Mammary epithelial cell (primary cell): ENCODE measurements at regions of chr1 and their contacts with region 1.

Region 1: DNA sequence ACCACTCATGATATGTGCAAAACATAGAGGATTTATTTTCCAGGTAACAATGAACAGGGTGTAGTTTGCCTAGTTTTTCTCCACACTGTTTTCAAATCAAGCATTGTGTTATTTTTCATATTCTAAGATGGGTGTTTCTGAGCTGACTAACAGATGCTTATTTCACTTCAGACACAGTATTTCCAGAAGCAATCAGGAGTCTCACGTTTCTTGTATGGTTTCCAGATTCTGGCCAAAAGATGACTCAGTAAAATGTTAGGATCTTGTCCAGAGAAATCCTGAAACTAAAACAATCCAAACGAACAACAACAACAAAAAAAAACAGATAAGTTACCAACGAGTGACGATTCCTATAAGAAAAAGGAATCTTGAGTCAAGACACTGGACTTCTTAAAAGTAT is 5.3 kb downstream of the UTS2 start:
- DNase-seq: peak; percentile 9
- H3K4me3 ChIP-seq: no peak overlapping the region
- H3K27ac ChIP-seq: no peak overlapping the region
- H3K4me1 ChIP-seq: no peaks in the 10 kb centered on the region
- H3K27me3 ChIP-seq: no peaks in the 10 kb centered on the region
- CTCF ChIP-seq: no peak

Region 2: DNA sequence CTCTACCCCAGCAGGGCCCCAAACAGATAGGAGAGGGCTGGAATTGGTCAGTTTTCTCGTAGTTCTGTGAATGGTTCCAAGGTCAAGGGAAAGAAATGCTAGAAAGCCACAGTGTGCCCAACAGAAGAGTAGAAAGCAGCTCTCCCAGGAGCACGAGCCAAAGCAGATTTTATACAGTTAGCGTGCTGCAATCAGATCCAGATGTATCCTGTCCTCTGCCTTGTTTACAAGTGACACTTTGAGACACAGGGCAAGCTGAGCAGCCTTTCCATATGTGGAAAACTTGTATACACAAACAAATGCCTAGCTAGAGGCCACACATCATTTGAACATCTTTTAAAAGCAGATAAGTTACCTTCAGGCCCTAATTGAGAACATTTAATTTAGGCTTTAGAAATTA is 70.0 kb before region 1 on chr1:
- CTCF ChIA-PET with region 1: no interaction called
- dilution Hi-C with region 1: loop called (anchors 5 kb)
- in situ Hi-C with region 1: no loop called
- intact Hi-C with region 1: no loop called
- DNase-seq: no peak
- H3K4me3 ChIP-seq: no peak overlapping the region
- H3K27ac ChIP-seq: no peak overlapping the region
- H3K4me1 ChIP-seq: peaks cover 4% of the 10 kb centered on the region
- H3K27me3 ChIP-seq: no peaks in the 10 kb centered on the region
- CTCF ChIP-seq: no peak

Region 3: DNA sequence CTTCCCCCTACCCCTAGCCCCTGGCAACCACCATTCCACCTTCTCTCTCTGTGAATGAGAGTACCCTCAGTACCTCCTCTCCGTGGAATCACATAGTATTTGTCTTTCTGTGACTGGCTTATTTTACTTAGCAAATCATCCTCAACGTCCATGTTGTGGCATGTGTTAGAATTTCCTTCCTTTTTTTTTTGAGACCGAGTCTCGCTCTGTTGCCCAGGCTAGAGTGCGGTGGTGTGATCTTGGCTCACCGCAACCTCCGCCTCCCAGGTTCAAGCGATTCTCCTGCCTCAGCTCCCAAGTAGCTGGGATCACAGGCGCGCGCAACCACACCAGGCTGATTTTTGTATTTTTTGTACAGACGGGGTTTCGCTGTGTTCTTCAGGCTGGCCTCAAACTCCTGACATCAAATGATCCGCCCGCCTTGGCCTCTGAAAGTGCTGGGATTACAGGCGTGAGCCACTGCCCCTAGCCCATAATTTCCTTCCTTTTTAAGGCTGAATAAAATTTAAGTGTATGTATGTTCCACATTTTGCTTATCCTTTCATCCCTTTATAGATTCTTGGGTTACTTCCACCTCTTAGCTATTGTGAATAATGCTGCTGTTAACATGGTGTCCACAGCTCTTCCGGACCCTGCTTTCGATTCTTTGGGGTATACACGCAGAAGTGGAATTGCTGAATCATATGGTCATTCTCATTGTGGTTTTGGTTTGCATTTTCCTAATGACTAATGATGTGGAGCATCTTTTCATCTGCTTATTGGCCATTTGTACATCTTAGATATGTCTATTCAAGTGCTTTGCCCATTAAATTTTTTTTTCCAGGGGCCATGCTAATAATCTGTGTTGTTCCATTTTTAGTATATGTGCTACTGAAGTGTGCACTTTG is 146.2 kb after region 1 on chr1:
- CTCF ChIA-PET with region 1: no interaction called
- dilution Hi-C with region 1: loop called (anchors 10 kb)
- in situ Hi-C with region 1: no loop called
- intact Hi-C with region 1: no loop called
- DNase-seq: no peak
- H3K4me3 ChIP-seq: no peak overlapping the region
- H3K27ac ChIP-seq: no peak overlapping the region
- H3K4me1 ChIP-seq: peaks cover 3% of the 10 kb centered on the region
- H3K27me3 ChIP-seq: no peaks in the 10 kb centered on the region
- CTCF ChIP-seq: no peak